ENCODE measurements at regions of chr11 and their contacts with region 1.

Region 1: DNA sequence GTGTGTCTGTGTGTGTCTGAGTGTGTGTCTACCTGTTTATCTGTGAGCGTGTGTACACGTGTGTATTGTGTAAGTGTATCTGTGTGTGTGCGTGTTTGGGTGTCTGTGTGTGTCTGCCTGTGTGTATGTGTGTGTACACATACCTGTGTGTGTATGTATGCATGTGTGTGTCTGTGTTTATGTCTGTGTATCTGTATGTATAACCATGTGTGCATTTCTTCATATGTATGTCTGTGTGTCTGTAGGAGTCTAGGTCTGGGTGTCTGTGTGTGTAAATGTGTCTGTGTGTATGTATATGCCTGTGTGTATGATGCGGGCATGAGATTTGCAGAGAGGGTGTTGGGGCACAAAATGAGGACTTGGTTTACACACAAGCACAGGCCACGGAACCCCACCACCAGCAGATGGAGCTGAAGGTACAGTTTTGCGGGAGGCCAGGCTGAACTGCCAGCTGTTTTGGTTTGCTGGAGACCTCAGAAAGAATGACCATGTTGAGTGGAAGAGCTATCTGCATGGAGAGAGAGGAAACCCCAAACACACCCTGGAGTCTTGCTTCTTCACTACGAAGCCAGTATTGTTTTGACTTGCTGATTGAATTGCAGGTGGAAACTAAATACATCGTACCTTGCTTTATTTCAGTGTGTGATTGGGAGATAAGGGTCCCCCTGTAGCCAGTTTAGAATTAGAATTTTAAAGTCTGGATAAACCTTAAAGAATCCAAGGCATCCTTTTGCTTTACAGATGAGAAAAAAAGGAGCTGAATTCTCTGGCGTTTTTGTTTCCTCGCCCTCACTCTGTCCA is 497.2 kb downstream of the NTM start:
- DNase-seq: peak; percentile 89
- ATAC-seq: peak; percentile 98
- H3K4me3 ChIP-seq: no peak overlapping the region
- H3K27ac ChIP-seq: no peak overlapping the region
- H3K4me1 ChIP-seq: no peaks in the 10 kb centered on the region
- H3K27me3 ChIP-seq: no peaks in the 10 kb centered on the region
- CTCF ChIP-seq: peak; percentile 97
- POLR2A ChIP-seq: peak; percentile 65
- RAD21 ChIP-seq: peak; percentile 100

Region 2: DNA sequence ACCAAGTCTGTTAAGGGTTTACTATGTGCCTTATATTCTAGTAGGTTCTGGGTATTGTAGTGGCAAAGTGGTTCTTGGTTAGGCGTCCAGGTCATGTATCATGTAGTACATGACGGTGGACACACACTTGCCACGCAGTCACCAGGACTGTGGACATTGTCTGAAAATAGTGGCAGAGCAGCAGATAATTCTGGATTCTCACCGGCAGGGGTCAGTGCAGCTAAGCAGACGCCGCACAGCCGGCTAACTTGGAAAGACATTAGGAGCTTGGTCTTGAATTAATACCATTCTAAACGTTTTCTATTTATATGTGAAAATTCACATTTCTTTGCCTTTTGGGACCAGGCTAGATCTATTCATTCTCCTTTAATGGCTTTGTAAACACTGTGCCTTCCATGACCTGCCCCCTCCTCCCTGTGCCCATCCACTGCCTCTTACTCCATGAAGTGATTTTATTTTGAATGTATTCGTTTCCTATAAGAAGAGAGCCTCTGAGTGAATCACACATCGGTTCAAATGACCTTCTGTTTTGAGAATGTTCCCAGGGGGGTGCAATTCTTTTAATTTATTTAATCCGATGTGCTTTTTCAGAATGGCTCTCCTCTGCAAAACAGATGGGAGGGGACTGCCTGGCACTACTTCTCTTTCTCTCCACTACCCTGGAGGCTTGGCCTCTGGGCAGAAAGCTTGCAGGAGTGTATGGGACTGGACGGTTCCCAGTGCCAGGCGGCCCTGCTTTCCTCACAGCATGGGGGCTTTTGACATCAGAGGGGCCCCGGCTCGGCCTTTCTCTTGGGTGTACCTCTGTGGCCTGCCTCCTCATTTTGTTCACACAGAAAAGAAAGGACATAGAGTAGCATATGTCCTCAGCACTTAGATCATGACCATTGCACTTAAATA is 119.3 kb before region 1 on chr11:
- CTCF ChIA-PET with region 1: interaction called, 7 read pairs
- POLR2A ChIA-PET with region 1: no interaction called
- dilution Hi-C with region 1: no loop called
- in situ Hi-C with region 1: no loop called
- intact Hi-C with region 1: loop called (anchors 1 kb)
- DNase-seq: peak; percentile 79
- ATAC-seq: peak; percentile 69
- H3K4me3 ChIP-seq: no peak overlapping the region
- H3K27ac ChIP-seq: no peak overlapping the region; the same call in 1 of the 2 replicates
- H3K4me1 ChIP-seq: peaks cover 17% of the 10 kb centered on the region
- H3K27me3 ChIP-seq: no peaks in the 10 kb centered on the region
- CTCF ChIP-seq: peak; percentile 88
- POLR2A ChIP-seq: no peak
- RAD21 ChIP-seq: peak; percentile 90

Region 3: DNA sequence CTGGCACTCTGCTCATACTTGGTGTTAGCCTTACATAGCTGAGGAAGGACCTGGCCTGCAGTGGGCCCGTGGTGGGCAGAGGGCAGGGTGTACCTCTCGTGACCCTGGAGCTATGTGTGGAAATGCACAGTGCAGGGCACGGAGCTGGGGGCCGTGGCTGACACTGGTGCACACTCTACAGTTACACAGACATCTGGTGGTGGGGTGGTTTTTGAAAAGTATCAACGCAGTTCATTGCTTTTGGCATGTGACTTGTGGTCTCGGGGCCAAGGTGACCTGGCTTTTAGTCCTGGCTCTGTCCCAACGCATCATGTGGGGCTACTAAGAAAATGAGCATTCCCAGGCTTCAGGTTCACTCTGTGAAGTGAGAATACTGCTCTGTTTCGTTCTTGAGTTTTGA is 56.3 kb after region 1 on chr11:
- CTCF ChIA-PET with region 1: no interaction called
- POLR2A ChIA-PET with region 1: no interaction called
- dilution Hi-C with region 1: no loop called
- in situ Hi-C with region 1: no loop called
- intact Hi-C with region 1: no loop called
- DNase-seq: peak; percentile 36
- ATAC-seq: peak; percentile 38
- H3K4me3 ChIP-seq: no peak overlapping the region
- H3K27ac ChIP-seq: peak overlapping the region; percentile 23
- H3K4me1 ChIP-seq: peaks cover 7% of the 10 kb centered on the region
- H3K27me3 ChIP-seq: no peaks in the 10 kb centered on the region
- CTCF ChIP-seq: no peak
- POLR2A ChIP-seq: no peak
- RAD21 ChIP-seq: no peak

Region 4: GRCh38 chr11:132028380-132029240 is 161.0 kb after region 1 on chr11:
- CTCF ChIA-PET with region 1: no interaction called
- POLR2A ChIA-PET with region 1: no interaction called
- dilution Hi-C with region 1: no loop called
- in situ Hi-C with region 1: no loop called
- intact Hi-C with region 1: loop called (anchors 2 kb)
- DNase-seq: peak; percentile 73
- ATAC-seq: 0 out of 2 replicates have a peak, but pooled peaks have one; percentile 27
- H3K4me3 ChIP-seq: no peak overlapping the region
- H3K27ac ChIP-seq: no peak overlapping the region
- H3K4me1 ChIP-seq: peaks cover 23% of the 10 kb centered on the region
- H3K27me3 ChIP-seq: no peaks in the 10 kb centered on the region
- CTCF ChIP-seq: peak; percentile 61
- POLR2A ChIP-seq: no peak
- RAD21 ChIP-seq: peak; percentile 47

Region 5: DNA sequence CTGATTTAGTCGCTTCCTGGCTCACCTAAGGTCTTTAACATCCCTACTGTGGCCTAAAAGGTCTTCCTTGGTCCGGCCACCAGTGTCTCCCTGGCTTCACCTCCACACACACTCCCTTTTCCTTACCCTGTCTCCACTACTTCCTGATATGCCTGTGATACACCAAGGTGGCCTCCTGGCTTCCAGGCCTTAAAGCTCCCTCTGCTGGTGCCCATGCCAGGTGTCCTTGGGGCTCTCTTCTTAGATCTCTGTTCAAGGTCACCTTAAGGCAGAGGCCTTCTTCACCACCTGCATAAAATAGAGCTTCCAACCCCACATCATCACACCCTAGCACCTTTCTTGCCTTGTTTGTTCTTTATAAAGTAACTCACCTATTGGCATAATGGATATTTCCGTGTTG is 290.4 kb after region 1 on chr11:
- CTCF ChIA-PET with region 1: interaction called, 3 read pairs
- POLR2A ChIA-PET with region 1: no interaction called
- dilution Hi-C with region 1: no loop called
- in situ Hi-C with region 1: no loop called
- intact Hi-C with region 1: loop called (anchors 1 kb)
- DNase-seq: peak; percentile 14
- ATAC-seq: peak; percentile 32; the same call in 1 of the 2 replicates
- H3K4me3 ChIP-seq: no peak overlapping the region
- H3K27ac ChIP-seq: no peak overlapping the region
- H3K4me1 ChIP-seq: peaks cover 3% of the 10 kb centered on the region; the same call in 1 of the 2 replicates
- H3K27me3 ChIP-seq: no peaks in the 10 kb centered on the region
- CTCF ChIP-seq: peak; percentile 34; the same call in 1 of the 2 replicates
- POLR2A ChIP-seq: no peak
- RAD21 ChIP-seq: peak; percentile 39

Region 6: GRCh38 chr11:132402071-132402684 is 534.5 kb after region 1 on chr11:
- CTCF ChIA-PET with region 1: interaction called, 3 read pairs
- POLR2A ChIA-PET with region 1: no interaction called
- dilution Hi-C with region 1: no loop called
- in situ Hi-C with region 1: no loop called
- intact Hi-C with region 1: loop called (anchors 1 kb)
- DNase-seq: peak; percentile 51
- ATAC-seq: peak; percentile 88
- H3K4me3 ChIP-seq: no peak overlapping the region
- H3K27ac ChIP-seq: no peak overlapping the region
- H3K4me1 ChIP-seq: no peaks in the 10 kb centered on the region
- H3K27me3 ChIP-seq: no peaks in the 10 kb centered on the region; the same call in 1 of the 2 replicates
- CTCF ChIP-seq: peak; percentile 60
- POLR2A ChIP-seq: no peak
- RAD21 ChIP-seq: peak; percentile 85

Region 7: GRCh38 chr11:133064152-133064877 is 1196.7 kb after region 1 on chr11:
- CTCF ChIA-PET with region 1: interaction called, 5 read pairs
- POLR2A ChIA-PET with region 1: no interaction called
- dilution Hi-C with region 1: no loop called
- in situ Hi-C with region 1: loop called (anchors 10 kb)
- intact Hi-C with region 1: loop called (anchors 5 kb)
- DNase-seq: peak; percentile 48
- ATAC-seq: peak; percentile 92
- H3K4me3 ChIP-seq: peak overlapping the region; percentile 44
- H3K27ac ChIP-seq: no peak overlapping the region
- H3K4me1 ChIP-seq: no peaks in the 10 kb centered on the region
- H3K27me3 ChIP-seq: no peaks in the 10 kb centered on the region
- CTCF ChIP-seq: peak; percentile 63
- POLR2A ChIP-seq: no peak
- RAD21 ChIP-seq: peak; percentile 76

Measured in IMR-90 (cell line).